Endothelial cell of umbilical vein (primary cell): ENCODE measurements at regions of chr6 and their contacts with region 1.

Region 1: GRCh38 chr6:80214436-80215022 is 108.1 kb downstream of the BCKDHB start:
- DNase-seq: peak; percentile 62
- H3K4me3 ChIP-seq: no peak overlapping the region
- H3K27ac ChIP-seq: no peak overlapping the region
- H3K4me1 ChIP-seq: no peaks in the 10 kb centered on the region
- H3K27me3 ChIP-seq: no peaks in the 10 kb centered on the region
- CTCF ChIP-seq: peak; percentile 55 to 74
- POLR2A ChIP-seq: no peak

Region 2: DNA sequence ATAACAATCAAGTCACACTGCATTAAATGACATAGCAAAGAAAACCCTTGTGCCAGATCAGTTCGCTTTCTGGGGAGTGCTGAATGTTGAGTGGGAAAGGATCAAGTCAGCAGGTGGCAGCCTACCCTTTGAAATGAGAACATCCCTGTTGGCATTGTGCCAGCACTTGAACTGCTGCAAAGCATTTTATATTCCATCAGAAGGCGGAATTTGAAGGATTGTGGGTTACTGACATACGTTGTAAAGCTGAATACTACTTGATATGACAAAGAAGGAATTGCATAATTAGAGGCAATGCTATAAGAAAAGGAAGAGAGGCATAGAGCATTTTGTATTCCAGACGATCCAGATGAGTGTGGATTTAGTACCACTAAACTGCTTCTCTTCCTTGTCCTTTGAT is 81.5 kb before region 1 on chr6:
- CTCF ChIA-PET with region 1: interaction called, 5 read pairs
- POLR2A ChIA-PET with region 1: no interaction called
- dilution Hi-C with region 1: no loop called
- intact Hi-C with region 1: loop called (anchors 2 kb)
- DNase-seq: peak; percentile 58
- H3K4me3 ChIP-seq: no peak overlapping the region
- H3K27ac ChIP-seq: no peak overlapping the region
- H3K4me1 ChIP-seq: peaks cover 7% of the 10 kb centered on the region
- H3K27me3 ChIP-seq: no peaks in the 10 kb centered on the region
- CTCF ChIP-seq: peak; percentile 39 to 45
- POLR2A ChIP-seq: no peak

Region 3: DNA sequence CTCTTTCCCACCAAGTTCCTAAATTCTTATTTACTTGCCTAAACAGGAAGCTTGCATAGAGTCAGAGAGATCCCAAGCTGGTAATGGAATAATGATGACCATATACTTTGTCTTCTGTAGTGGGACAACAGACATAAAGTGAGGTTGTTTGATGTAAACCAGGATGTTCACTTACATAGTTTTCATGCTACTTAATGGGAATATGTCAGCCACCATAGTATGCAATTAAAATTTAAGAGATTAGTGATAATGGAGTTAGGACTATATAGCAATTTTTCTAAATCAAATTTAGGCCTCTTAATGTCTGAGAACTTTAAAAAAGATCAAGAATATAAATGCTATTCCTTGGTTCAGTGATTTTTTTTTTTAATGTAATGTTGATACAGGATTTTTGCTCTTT is 72.6 kb after region 1 on chr6:
- CTCF ChIA-PET with region 1: no interaction called
- POLR2A ChIA-PET with region 1: no interaction called
- dilution Hi-C with region 1: no loop called
- intact Hi-C with region 1: no loop called
- DNase-seq: no peak
- H3K4me3 ChIP-seq: no peak overlapping the region
- H3K27ac ChIP-seq: no peak overlapping the region
- H3K4me1 ChIP-seq: no peaks in the 10 kb centered on the region
- H3K27me3 ChIP-seq: no peaks in the 10 kb centered on the region
- CTCF ChIP-seq: no peak
- POLR2A ChIP-seq: no peak

Region 4: DNA sequence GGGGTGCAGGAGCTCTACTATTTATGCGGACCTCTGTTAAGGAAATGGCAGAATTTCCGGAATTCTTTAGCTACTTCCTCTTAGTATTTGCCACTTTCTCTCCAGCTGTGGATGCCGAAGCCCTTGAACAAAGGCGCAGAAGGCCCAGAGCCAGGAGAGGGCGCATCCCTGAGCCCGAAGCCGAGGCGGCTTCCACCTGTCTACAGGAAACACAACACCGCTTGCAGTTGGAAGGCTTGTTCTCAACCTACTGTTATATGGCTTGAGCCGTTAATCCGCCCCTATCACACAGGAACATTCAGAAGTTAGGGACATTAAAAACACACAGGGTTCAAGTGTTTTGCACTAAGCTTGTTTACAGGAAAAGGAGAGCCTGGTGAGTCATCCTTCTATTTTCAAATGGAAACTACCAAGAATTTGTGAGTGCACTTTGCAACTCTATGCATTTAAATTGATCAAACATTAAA is 309.0 kb after region 1 on chr6:
- CTCF ChIA-PET with region 1: interaction called, 14 read pairs
- POLR2A ChIA-PET with region 1: no interaction called
- dilution Hi-C with region 1: no loop called
- intact Hi-C with region 1: no loop called
- DNase-seq: peak; percentile 93
- H3K4me3 ChIP-seq: peak overlapping the region in 1 of 3 experiments; percentile 21
- H3K27ac ChIP-seq: peak overlapping the region; percentile 79
- H3K4me1 ChIP-seq: peaks cover 23% of the 10 kb centered on the region
- H3K27me3 ChIP-seq: no peaks in the 10 kb centered on the region
- CTCF ChIP-seq: peak; percentile 61 to 67
- POLR2A ChIP-seq: no peak

Region 5: GRCh38 chr6:81241126-81242041 is 1026.9 kb after region 1 on chr6:
- CTCF ChIA-PET with region 1: interaction called, 8 read pairs
- POLR2A ChIA-PET with region 1: no interaction called
- dilution Hi-C with region 1: no loop called
- intact Hi-C with region 1: loop called (anchors 10 kb)
- DNase-seq: peak; percentile 23
- H3K4me3 ChIP-seq: no peak overlapping the region
- H3K27ac ChIP-seq: no peak overlapping the region
- H3K4me1 ChIP-seq: no peaks in the 10 kb centered on the region
- H3K27me3 ChIP-seq: no peaks in the 10 kb centered on the region
- CTCF ChIP-seq: peak; percentile 24 to 29
- POLR2A ChIP-seq: no peak

Region 6: GRCh38 chr6:82006027-82006738 is 1791.7 kb after region 1 on chr6:
- CTCF ChIA-PET with region 1: interaction called, 13 read pairs
- POLR2A ChIA-PET with region 1: no interaction called
- dilution Hi-C with region 1: no loop called
- intact Hi-C with region 1: no loop called
- DNase-seq: no peak
- H3K4me3 ChIP-seq: no peak overlapping the region
- H3K27ac ChIP-seq: no peak overlapping the region
- H3K4me1 ChIP-seq: no peaks in the 10 kb centered on the region
- H3K27me3 ChIP-seq: no peaks in the 10 kb centered on the region
- CTCF ChIP-seq: peak; percentile 61 to 66
- POLR2A ChIP-seq: no peak